Activated naive CD4-positive, alpha-beta T cell treated with anti-CD3 and anti-CD28 coated beads for 36 hours (primary cell): ENCODE measurements at regions of chr7 and their contacts with region 1.

Region 1: DNA sequence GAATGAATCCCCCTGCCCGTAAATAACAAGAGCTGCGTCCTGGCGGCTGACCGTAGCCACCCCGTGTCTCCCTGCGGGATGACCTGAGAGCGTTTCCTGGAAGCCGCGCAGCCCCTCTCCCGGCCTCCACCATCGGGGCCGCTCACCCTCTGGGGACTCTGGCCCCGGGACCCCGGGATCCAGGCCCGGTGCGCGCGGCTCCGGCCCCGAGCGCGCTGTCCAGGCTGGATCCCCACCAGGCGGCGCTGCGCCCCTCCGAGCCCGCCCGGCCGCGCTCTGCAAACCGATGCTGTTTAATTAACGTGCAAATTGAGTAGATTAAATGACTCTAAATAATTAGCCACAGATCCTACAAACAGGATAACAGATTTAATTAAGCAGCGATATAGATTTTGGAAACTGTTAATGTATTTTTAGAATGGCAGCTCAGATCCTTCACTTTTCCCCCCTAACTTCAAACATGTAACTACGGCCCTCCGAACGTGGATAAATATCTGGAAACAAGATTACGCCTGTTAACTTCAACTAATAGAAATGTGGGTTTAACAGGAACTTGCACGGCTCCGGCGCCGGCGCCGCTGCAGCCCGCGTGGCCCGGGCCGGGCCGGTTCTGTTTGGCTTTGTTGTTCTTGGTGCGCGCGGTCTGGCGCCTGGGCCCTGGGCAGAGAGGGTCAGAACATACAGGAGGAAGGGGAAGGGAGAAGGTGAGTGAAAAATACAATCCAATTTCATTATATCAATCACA is 7.1 kb upstream of the UNCX start:
- DNase-seq: peak; percentile 49
- H3K4me3 Mint-ChIP-seq: no peak overlapping the region
- H3K27ac Mint-ChIP-seq: no peak overlapping the region
- H3K4me1 Mint-ChIP-seq: peaks cover 2% of the 10 kb centered on the region
- H3K27me3 Mint-ChIP-seq: peaks cover 56% of the 10 kb centered on the region

Region 2: DNA sequence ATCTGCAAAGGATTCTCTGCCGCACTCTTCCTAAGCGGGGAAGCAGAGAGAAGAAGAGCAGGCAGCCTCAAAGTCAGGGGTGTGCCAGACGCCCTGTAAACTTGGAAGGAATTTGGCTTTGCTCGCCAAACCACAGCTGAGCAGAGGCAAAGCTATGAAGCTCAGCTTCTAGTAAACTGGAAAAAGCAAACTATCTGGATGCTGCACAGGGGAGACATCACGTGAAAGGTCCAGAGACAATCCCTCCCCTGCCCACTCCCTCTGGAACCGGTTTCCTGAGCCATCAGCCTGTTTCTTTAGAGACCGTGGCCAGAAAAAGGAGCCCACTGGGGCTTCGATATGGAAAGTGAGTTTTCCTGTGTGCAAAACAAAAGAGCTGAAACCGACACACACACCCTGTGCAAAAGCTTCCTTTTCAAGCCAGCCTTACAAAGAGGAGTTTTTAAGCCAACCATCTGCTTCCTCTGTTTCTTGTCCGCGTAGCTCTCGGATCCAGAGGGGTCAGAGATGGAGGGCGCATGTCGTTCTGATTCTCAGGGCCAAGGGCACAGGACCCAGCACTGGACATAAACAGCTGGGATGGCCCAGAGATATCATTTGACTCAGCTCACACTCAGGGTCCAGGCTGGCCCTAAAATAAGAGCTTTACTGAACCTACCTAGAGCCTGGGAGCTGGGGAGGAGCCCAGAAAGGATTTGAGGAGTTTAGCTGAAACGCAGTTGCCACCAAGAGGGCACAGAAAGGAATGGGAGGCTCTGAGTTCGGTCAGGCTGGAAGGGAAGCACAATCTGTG is 557.3 kb before region 1 on chr7:
- CTCF ChIA-PET with region 1: no interaction called
- intact Hi-C with region 1: no loop called
- DNase-seq: no peak
- H3K4me3 Mint-ChIP-seq: peak overlapping the region; percentile 9
- H3K27ac Mint-ChIP-seq: no peak overlapping the region
- H3K4me1 Mint-ChIP-seq: no peaks in the 10 kb centered on the region
- H3K27me3 Mint-ChIP-seq: no peaks in the 10 kb centered on the region

Region 3: GRCh38 chr7:1169409-1170368 is 55.9 kb before region 1 on chr7:
- CTCF ChIA-PET with region 1: no interaction called
- intact Hi-C with region 1: no loop called
- DNase-seq: peak; percentile 99
- H3K4me3 Mint-ChIP-seq: peak overlapping the region; percentile 88
- H3K27ac Mint-ChIP-seq: peak overlapping the region; percentile 92
- H3K4me1 Mint-ChIP-seq: peaks cover 13% of the 10 kb centered on the region
- H3K27me3 Mint-ChIP-seq: no peaks in the 10 kb centered on the region

Region 4: DNA sequence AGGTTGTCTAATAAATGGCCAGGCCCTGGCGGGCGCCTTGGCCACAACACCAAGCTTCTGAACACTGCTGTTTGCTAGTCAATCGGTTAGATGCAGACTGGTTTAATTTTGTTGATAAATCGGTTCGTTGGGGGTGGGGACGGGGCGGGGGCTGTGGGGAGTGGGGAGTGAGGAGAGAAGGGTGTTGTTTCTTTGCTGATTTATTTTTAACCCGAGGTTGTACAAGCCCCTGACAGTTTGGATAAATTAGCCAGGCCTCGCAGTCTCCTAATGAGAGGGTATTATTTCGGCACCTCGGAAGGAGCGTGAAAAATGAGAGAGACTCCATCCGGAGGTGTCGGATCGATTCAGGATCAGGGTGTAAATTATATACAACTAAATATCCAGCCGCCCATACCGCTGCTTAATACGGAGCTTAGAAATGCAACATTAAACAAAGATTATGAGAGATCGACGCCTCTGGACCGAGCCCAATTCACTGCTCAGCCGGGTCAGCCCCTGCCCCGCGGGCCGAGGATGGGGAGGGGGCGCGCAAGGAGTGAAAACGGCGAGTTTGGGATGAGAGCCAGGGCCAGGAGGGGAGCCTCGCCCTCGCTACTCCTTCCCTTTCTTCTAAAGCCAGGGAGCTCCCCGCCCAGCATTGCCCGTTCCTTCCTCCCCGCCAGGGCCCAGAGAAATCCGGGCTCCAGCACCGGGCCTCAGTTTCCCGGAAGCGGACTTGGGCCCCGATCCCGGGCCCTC is 15.1 kb after region 1 on chr7:
- CTCF ChIA-PET with region 1: interaction called, 3 read pairs
- intact Hi-C with region 1: loop called (anchors 2 kb)
- DNase-seq: no peak
- H3K4me3 Mint-ChIP-seq: no peak overlapping the region
- H3K27ac Mint-ChIP-seq: no peak overlapping the region
- H3K4me1 Mint-ChIP-seq: peaks cover 6% of the 10 kb centered on the region
- H3K27me3 Mint-ChIP-seq: peaks cover 60% of the 10 kb centered on the region

Region 5: GRCh38 chr7:1357601-1358271 is 132.1 kb after region 1 on chr7:
- CTCF ChIA-PET with region 1: no interaction called
- intact Hi-C with region 1: no loop called
- DNase-seq: peak; percentile 9
- H3K4me3 Mint-ChIP-seq: no peak overlapping the region
- H3K27ac Mint-ChIP-seq: no peak overlapping the region
- H3K4me1 Mint-ChIP-seq: no peaks in the 10 kb centered on the region
- H3K27me3 Mint-ChIP-seq: peaks cover 4% of the 10 kb centered on the region

Region 6: DNA sequence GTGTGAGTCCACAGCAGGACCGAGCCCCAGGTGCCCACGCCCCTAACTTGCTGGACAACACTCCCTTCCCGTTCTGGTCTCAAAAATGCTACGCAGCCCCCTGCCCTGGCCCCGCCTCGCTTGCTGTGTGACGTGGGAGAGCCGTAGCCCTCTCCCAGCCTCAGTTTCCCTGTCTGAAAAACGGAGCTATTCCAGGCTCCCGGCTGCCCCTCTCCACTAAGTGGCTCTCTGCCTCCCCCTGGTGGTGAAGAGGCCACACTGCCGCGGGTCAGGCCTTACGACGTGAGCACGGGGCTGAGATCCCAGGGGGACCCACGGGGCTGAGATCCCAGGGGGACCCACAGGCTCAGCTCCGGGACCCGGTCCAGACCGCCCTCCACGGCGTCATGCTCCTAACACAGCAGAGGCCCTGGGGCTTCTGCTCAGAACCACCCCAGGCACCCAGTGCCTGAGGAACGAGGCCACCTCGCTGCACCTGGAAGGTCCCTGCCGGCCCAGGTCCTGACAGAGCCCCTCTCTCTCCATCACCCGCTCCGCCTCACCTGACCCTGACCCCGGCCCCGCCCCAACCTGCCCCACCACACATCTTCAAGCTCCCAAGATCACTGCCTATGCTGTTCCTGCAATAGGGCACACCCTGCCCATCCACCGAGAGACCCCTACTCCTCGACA is 206.9 kb after region 1 on chr7:
- CTCF ChIA-PET with region 1: interaction called, 3 read pairs
- intact Hi-C with region 1: loop called (anchors 2 kb)
- DNase-seq: peak; percentile 87
- H3K4me3 Mint-ChIP-seq: no peak overlapping the region
- H3K27ac Mint-ChIP-seq: no peak overlapping the region
- H3K4me1 Mint-ChIP-seq: peaks cover 3% of the 10 kb centered on the region
- H3K27me3 Mint-ChIP-seq: peaks cover 2% of the 10 kb centered on the region

Region 7: DNA sequence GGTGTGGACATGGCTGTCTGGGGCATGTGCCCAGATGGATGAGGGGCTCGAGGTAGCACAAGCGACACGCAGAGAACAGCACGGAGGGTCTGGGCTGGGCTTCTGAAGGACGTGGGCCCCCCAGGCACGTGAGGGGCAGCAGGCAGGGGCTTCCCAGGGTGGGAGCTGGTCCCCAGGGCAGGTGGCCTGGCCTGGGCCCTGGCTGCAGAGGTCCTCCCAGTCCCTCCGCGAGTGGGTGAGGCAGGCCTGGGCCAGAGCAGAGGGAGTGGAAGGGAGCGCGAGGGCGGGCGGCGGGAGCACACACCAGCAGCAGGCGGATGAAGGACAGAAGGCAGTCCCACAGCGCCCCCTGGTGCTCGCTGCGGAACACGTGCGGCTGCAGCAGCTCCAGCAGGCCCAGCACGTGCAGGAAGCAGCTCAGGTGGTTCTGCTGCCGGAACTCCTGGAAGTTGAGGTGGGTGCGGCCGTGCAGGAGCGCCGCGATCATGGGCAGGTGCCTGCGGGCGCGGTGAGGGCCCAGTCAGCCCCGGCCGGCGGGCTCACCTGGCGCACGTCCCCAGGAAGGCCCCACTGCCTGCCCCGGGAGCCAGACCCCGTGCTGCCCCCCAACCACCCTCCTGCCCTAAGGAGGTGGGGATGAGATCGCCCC is 248.4 kb after region 1 on chr7:
- CTCF ChIA-PET with region 1: interaction called, 10 read pairs
- intact Hi-C with region 1: loop called (anchors 1 kb)
- DNase-seq: peak; percentile 93
- H3K4me3 Mint-ChIP-seq: no peak overlapping the region
- H3K27ac Mint-ChIP-seq: no peak overlapping the region
- H3K4me1 Mint-ChIP-seq: peaks cover 10% of the 10 kb centered on the region
- H3K27me3 Mint-ChIP-seq: no peaks in the 10 kb centered on the region